Mammary epithelial cell (primary cell): ENCODE measurements at regions of chr16 and their contacts with region 1.

Region 1: GRCh38 chr16:10022098-10022497 is 160.1 kb downstream of the GRIN2A start:
- DNase-seq: no peak
- H3K4me3 ChIP-seq: no peak overlapping the region
- H3K27ac ChIP-seq: no peak overlapping the region
- H3K4me1 ChIP-seq: no peaks in the 10 kb centered on the region
- H3K27me3 ChIP-seq: no peaks in the 10 kb centered on the region
- CTCF ChIP-seq: no peak

Region 2: GRCh38 chr16:10048850-10049249 is 26.8 kb after region 1 on chr16:
- CTCF ChIA-PET with region 1: no interaction called
- dilution Hi-C with region 1: no loop called
- in situ Hi-C with region 1: no loop called
- intact Hi-C with region 1: no loop called
- DNase-seq: no peak
- H3K4me3 ChIP-seq: no peak overlapping the region
- H3K27ac ChIP-seq: no peak overlapping the region
- H3K4me1 ChIP-seq: no peaks in the 10 kb centered on the region
- H3K27me3 ChIP-seq: no peaks in the 10 kb centered on the region
- CTCF ChIP-seq: no peak

Region 3: GRCh38 chr16:10090816-10091215 is 68.7 kb after region 1 on chr16:
- CTCF ChIA-PET with region 1: no interaction called
- dilution Hi-C with region 1: no loop called
- in situ Hi-C with region 1: no loop called
- intact Hi-C with region 1: loop called (anchors 2 kb)
- DNase-seq: peak; percentile 84
- H3K4me3 ChIP-seq: no peak overlapping the region
- H3K27ac ChIP-seq: peak overlapping the region; percentile 51
- H3K4me1 ChIP-seq: peaks cover 3% of the 10 kb centered on the region
- H3K27me3 ChIP-seq: no peaks in the 10 kb centered on the region
- CTCF ChIP-seq: no peak